Tibial artery (tissue), 4 donors: ENCODE measurements at regions of chr15 and their contacts with region 1.

Region 1: DNA sequence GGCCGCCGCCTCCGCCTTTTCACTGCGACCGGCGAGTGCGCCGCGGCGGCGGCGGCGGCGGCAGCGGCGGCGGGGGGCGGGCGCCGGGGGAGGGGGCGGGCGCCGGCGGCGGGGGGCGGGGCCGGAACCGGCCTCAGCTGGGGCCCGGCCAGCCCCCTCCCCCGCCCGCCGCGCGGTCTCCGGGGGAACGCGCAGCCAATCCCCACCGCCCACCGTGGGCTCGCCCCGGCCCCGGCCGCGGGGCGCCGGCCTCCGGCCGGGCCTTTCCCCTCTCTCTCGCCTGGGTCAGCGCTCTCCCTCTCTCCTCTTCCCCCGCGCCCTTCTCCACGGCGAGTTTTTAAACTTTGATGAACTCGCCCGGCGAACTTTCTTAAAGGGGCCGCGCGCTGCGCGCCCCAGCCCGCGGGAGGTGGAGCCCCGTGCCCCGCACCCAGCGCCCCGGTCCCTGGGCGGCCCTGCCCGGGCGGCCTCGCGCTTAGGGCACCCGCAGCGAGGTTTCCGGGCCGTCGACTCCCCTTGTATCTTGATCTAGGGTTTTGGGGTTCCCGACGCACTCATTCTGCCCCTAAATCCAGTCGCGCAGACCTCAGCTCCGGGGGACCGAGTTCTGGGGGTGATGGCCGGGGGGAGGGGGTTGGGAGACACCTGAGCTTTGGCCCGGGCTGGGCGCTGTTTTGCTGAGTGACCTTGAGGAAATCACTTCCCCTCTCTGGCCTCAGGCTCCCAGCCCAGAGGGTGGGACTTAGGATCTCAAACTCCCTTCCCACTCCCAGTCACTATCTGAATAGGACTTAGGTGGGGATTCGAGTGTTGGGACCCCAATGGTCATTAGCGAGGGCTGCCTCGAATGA is at the start of gene RBPMS2:
- DNase-seq: peak in 1 of 2 donors; percentile 36
- H3K4me3 ChIP-seq: peak within 1 kb of the TSS; percentile 75 to 76
- H3K27ac ChIP-seq: peak within 1 kb of the TSS; percentile 88 to 96
- H3K4me1 ChIP-seq: peaks cover 0 to 41% (median 8%) of the 10 kb centered on the region in 4 donors
- H3K27me3 ChIP-seq: no peaks in the 10 kb centered on the region
- CTCF ChIP-seq: no peak

Region 2: GRCh38 chr15:64740311-64741170 is 35.2 kb before region 1 on chr15:
- intact Hi-C with region 1: loop called (anchors 2 kb)
- DNase-seq: peak; percentile 52 to 84
- H3K4me3 ChIP-seq: no peak overlapping the region
- H3K27ac ChIP-seq: peak overlapping the region; percentile 62 to 78
- H3K4me1 ChIP-seq: peaks cover 0 to 49% (median 1%) of the 10 kb centered on the region in 4 donors
- H3K27me3 ChIP-seq: no peaks in the 10 kb centered on the region
- CTCF ChIP-seq: no peak

Region 3: GRCh38 chr15:65049418-65049840 is 273.7 kb after region 1 on chr15:
- intact Hi-C with region 1: no loop called
- DNase-seq: peak; percentile 93
- H3K4me3 ChIP-seq: peak overlapping the region in 1 of 2 donors; percentile 38
- H3K27ac ChIP-seq: peak overlapping the region; percentile 39 to 59
- H3K4me1 ChIP-seq: peaks cover 0 to 61% (median 15%) of the 10 kb centered on the region in 4 donors
- H3K27me3 ChIP-seq: no peaks in the 10 kb centered on the region
- CTCF ChIP-seq: no peak